Breast epithelium (tissue), 4 donors: ENCODE measurements at regions of chr9 and their contacts with region 1.

Region 1: GRCh38 chr9:135526675-135527571 is 5.7 kb downstream of the LCN1 start:
- DNase-seq: peak in 1 of 2 donors; percentile 48
- H3K4me3 ChIP-seq: no peak overlapping the region
- H3K27ac ChIP-seq: no peak overlapping the region
- H3K4me1 ChIP-seq: no peaks in the 10 kb centered on the region
- H3K27me3 ChIP-seq: peaks cover 0 to 34% of the 10 kb centered on the region in 2 donors
- CTCF ChIP-seq: no peak
- POLR2A ChIP-seq: no peak

Region 2: GRCh38 chr9:135309763-135310125 is 217.2 kb before region 1 on chr9:
- intact Hi-C with region 1: loop called (anchors 5 kb)
- DNase-seq: no peak
- H3K4me3 ChIP-seq: no peak overlapping the region
- H3K27ac ChIP-seq: no peak overlapping the region
- H3K4me1 ChIP-seq: no peaks in the 10 kb centered on the region
- H3K27me3 ChIP-seq: peaks cover 0 to 48% of the 10 kb centered on the region in 2 donors
- CTCF ChIP-seq: no peak
- POLR2A ChIP-seq: no peak